ENCODE measurements at regions of chr17 and their contacts with region 1.

Region 1: GRCh38 chr17:75779231-75779986 is 5.2 kb upstream of the UNK start:
- DNase-seq: peak; percentile 100
- ATAC-seq: peak; percentile 81
- H3K4me3 ChIP-seq: peak overlapping the region; percentile 73 to 92 (median 86)
- H3K27ac ChIP-seq: peak overlapping the region; percentile 91
- H3K4me1 ChIP-seq: peaks cover 58% of the 10 kb centered on the region
- H3K27me3 ChIP-seq: no peaks in the 10 kb centered on the region; a peak in 1 of 5 replicates
- CTCF ChIP-seq: no peak
- EP300 ChIP-seq: peak in 1 of 2 experiments; percentile 12; a peak in 1 of 4 replicates
- POLR2A ChIP-seq: peak; percentile 100
- RAD21 ChIP-seq: peak; percentile 80

Region 2: GRCh38 chr17:75749545-75750389 is 29.6 kb before region 1 on chr17:
- CTCF ChIA-PET with region 1: no interaction called
- POLR2A ChIA-PET with region 1: interaction called, 66 read pairs
- in situ Hi-C with region 1: no loop called
- intact Hi-C with region 1: no loop called
- DNase-seq: peak; percentile 67
- ATAC-seq: peak; percentile 59
- H3K4me3 ChIP-seq: peak overlapping the region in 1 of 3 experiments; percentile 64; a peak in 1 of 6 replicates
- H3K27ac ChIP-seq: no peak overlapping the region
- H3K4me1 ChIP-seq: peaks cover 46% of the 10 kb centered on the region
- H3K27me3 ChIP-seq: no peaks in the 10 kb centered on the region
- CTCF ChIP-seq: peak; percentile 98
- EP300 ChIP-seq: no peak
- POLR2A ChIP-seq: no peak
- RAD21 ChIP-seq: peak; percentile 93

Region 3: GRCh38 chr17:75808905-75809715 is 29.7 kb after region 1 on chr17:
- CTCF ChIA-PET with region 1: no interaction called
- POLR2A ChIA-PET with region 1: interaction called, 14 read pairs
- in situ Hi-C with region 1: no loop called
- intact Hi-C with region 1: no loop called
- DNase-seq: no peak
- ATAC-seq: no peak; the same call in 2 of the 3 replicates
- H3K4me3 ChIP-seq: no peak overlapping the region
- H3K27ac ChIP-seq: no peak overlapping the region
- H3K4me1 ChIP-seq: no peaks in the 10 kb centered on the region
- H3K27me3 ChIP-seq: no peaks in the 10 kb centered on the region
- CTCF ChIP-seq: no peak
- EP300 ChIP-seq: no peak
- POLR2A ChIP-seq: no peak
- RAD21 ChIP-seq: no peak

Region 4: DNA sequence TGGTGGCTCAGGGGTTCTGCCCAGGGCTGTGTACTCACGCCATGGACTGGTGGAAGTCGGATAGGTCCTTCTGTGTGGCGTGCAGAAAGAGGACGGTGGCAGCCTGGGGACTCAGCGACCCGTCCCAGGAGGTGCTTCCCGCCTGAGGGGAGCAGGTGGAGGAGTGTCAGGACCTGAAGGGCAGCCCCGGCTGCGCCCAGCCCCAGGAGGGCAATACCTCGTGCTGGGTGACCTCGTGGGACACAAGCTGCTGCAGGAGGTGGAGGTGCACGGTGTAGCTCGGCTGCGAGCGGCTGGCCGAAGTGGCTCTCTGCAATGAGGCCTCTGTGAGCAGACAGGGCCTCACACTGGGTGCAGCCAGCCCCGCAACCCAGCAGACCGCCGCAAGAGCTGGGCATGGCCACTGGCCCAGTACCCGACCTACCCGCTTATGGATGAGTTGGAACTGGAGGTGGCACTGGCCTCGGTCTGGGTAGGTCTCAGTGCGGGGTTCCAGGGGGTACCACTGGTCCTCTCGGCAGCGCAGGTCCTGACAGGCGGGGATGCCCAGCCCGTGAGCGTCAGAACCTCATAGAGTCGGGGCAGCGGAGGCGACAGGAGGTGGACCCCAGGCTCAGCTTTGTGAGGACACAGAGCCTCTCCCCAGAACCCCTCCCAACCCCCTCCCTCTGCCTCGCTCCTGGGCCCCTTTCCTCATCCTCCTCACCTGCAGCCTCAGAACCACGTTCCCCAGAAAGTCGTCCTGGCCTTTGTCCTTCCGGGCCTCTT is 60.6 kb after region 1 on chr17:
- CTCF ChIA-PET with region 1: no interaction called
- POLR2A ChIA-PET with region 1: interaction called, 132 read pairs
- in situ Hi-C with region 1: no loop called
- intact Hi-C with region 1: loop called (anchors 2 kb)
- DNase-seq: no peak
- ATAC-seq: no peak
- H3K4me3 ChIP-seq: no peak overlapping the region
- H3K27ac ChIP-seq: no peak overlapping the region
- H3K4me1 ChIP-seq: peaks cover 21% of the 10 kb centered on the region
- H3K27me3 ChIP-seq: no peaks in the 10 kb centered on the region
- CTCF ChIP-seq: no peak
- EP300 ChIP-seq: no peak
- POLR2A ChIP-seq: no peak
- RAD21 ChIP-seq: no peak

Region 5: GRCh38 chr17:75872434-75873351 is 93.3 kb after region 1 on chr17:
- CTCF ChIA-PET with region 1: no interaction called
- POLR2A ChIA-PET with region 1: interaction called, 81 read pairs
- in situ Hi-C with region 1: no loop called
- intact Hi-C with region 1: no loop called
- DNase-seq: peak; percentile 99
- ATAC-seq: peak; percentile 64
- H3K4me3 ChIP-seq: peak overlapping the region; percentile 13 to 62 (median 36); a peak in 5 of 6 replicates
- H3K27ac ChIP-seq: peak overlapping the region; percentile 97
- H3K4me1 ChIP-seq: peaks cover 88% of the 10 kb centered on the region
- H3K27me3 ChIP-seq: no peaks in the 10 kb centered on the region
- CTCF ChIP-seq: peak; percentile 43
- EP300 ChIP-seq: peak; percentile 81 to 87; a peak in 3 of 4 replicates
- POLR2A ChIP-seq: peak in 1 of 2 experiments; percentile 84; a peak in 2 of 4 replicates
- RAD21 ChIP-seq: peak; percentile 68

Region 6: GRCh38 chr17:75978938-75979704 is 199.7 kb after region 1 on chr17 and contains the starts of genes ACOX1 and TEN1:
- CTCF ChIA-PET with region 1: no interaction called
- POLR2A ChIA-PET with region 1: interaction called, 19 read pairs
- in situ Hi-C with region 1: no loop called
- intact Hi-C with region 1: no loop called
- DNase-seq: peak; percentile 98
- ATAC-seq: peak; percentile 87
- H3K4me3 ChIP-seq: peak within 1 kb of the TSS; percentile 74 to 98 (median 93)
- H3K27ac ChIP-seq: peak within 1 kb of the TSS; percentile 99
- H3K4me1 ChIP-seq: peaks cover 80% of the 10 kb centered on the region
- H3K27me3 ChIP-seq: no peaks in the 10 kb centered on the region; a peak in 1 of 5 replicates
- CTCF ChIP-seq: peak; percentile 72
- EP300 ChIP-seq: peak; percentile 12 to 52; a peak in 3 of 4 replicates
- POLR2A ChIP-seq: peak; percentile 87 to 97
- RAD21 ChIP-seq: no peak; the same call in none of the 2 replicates
- total RNA-seq, gene ACOX1: 120 and 156 TPM in 2 replicates
- total RNA-seq, gene TEN1: 14.7 and 18.0 TPM in 2 replicates

Measured in HepG2 (cell line).